ENCODE measurements at regions of chr2 and their contacts with region 1.

Region 1: DNA sequence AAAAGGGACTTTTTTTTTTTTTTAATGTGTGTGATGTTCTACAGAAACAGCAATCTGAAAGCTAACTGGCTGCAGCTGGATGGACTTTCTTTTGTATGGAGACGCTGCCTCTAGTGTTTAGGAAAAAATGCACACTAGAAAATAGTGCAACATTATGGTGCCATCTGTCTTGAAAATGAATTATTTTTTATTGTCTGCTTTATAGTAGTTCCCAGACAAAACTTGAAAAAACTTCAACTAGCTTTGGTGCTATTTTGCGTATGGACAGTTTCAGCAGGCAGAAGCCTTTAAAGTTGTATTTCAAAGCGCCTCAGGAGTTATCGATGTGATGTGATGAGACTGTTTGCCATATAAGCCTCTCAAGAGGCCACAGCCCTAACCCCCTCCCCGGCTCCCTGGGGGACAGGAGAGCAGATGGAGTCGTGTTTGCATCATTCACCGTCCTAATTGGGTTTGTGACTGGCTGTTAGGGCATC is 86.9 kb downstream of the LTBP1 start:
- DNase-seq: no peak
- H3K4me3 ChIP-seq: no peak overlapping the region
- H3K27ac ChIP-seq: no peak overlapping the region
- H3K4me1 ChIP-seq: no peaks in the 10 kb centered on the region
- H3K27me3 ChIP-seq: no peaks in the 10 kb centered on the region
- CTCF ChIP-seq: peak; percentile 38

Region 2: DNA sequence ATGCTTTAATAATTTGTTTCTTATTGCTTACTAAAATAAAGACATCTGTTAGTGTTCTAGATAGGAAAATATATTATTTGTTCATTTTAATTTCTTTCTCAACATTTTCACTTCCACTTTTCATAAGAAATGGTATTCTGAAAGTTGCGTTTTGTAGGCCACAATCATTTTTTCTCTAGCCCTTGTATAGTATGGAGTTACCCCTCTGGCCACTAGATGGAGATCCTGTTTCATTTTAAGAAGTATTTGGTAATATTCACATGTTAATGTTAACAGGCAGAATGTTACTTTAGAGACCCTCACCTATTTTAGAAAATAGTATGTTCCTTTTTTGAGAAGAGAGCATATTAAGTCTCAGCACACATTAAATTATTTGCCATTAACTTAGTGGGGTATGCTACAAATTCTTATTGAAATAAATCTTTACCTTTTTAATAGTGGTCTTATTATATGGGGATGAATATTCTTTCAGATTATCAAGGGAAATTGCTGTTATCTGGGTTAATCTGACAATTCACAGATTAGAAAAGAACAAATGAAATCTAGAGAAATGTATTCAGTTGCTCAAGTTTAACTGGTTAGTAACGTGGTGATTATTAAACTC is 479.7 kb before region 1 on chr2:
- intact Hi-C with region 1: loop called (anchors 10 kb)
- DNase-seq: no peak
- H3K4me3 ChIP-seq: no peak overlapping the region
- H3K27ac ChIP-seq: no peak overlapping the region
- H3K4me1 ChIP-seq: no peaks in the 10 kb centered on the region
- H3K27me3 ChIP-seq: no peaks in the 10 kb centered on the region
- CTCF ChIP-seq: peak; percentile 59

Region 3: DNA sequence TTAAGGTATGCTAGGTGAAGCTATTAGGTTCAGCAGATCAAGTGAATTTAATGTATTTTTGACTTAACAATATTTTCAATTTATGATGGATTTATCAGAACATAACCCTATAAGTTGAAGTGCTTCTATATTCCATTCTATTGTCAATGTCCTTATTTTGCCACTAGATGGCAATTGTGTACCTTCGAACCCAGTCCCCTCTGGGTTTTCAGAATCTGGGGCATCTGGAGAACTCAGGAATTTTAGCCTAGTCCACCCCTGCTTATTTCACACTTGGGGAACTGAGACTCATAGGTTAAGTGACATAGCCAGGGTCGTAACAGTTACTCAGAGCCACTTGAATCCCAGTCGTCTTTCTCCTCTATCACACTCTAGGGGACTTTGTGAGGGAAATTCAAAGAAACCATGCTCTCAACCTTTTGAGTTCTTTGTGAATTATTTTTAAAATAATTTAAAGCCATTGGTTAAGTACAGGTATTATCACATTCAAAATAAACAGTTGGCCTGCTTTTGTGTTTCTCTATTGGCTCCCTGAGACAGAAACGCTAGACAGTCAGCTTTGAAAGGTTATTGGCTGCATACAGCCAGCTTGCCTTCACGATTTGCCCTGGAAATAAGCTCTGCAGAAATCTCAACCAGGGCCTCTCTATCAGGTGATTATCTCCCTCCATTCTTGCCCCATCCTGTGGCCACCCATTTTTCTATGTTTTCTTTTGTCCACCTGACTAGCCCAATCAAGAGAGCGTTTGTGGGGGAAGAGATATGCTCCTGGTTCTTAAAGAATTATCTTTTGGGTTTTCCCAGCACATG is 260.8 kb before region 1 on chr2:
- intact Hi-C with region 1: loop called (anchors 5 kb)
- DNase-seq: no peak
- H3K4me3 ChIP-seq: no peak overlapping the region
- H3K27ac ChIP-seq: no peak overlapping the region
- H3K4me1 ChIP-seq: no peaks in the 10 kb centered on the region
- H3K27me3 ChIP-seq: no peaks in the 10 kb centered on the region
- CTCF ChIP-seq: peak; percentile 62

Region 4: GRCh38 chr2:32942793-32943485 is 90.7 kb before region 1 on chr2:
- intact Hi-C with region 1: loop called (anchors 5 kb)
- DNase-seq: no peak
- H3K4me3 ChIP-seq: no peak overlapping the region
- H3K27ac ChIP-seq: no peak overlapping the region
- H3K4me1 ChIP-seq: no peaks in the 10 kb centered on the region
- H3K27me3 ChIP-seq: no peaks in the 10 kb centered on the region
- CTCF ChIP-seq: no peak

Region 5: GRCh38 chr2:33275689-33276444 is 242.2 kb after region 1 on chr2:
- intact Hi-C with region 1: loop called (anchors 10 kb)
- DNase-seq: no peak
- H3K4me3 ChIP-seq: no peak overlapping the region
- H3K27ac ChIP-seq: no peak overlapping the region
- H3K4me1 ChIP-seq: no peaks in the 10 kb centered on the region
- H3K27me3 ChIP-seq: no peaks in the 10 kb centered on the region
- CTCF ChIP-seq: no peak

Region 6: DNA sequence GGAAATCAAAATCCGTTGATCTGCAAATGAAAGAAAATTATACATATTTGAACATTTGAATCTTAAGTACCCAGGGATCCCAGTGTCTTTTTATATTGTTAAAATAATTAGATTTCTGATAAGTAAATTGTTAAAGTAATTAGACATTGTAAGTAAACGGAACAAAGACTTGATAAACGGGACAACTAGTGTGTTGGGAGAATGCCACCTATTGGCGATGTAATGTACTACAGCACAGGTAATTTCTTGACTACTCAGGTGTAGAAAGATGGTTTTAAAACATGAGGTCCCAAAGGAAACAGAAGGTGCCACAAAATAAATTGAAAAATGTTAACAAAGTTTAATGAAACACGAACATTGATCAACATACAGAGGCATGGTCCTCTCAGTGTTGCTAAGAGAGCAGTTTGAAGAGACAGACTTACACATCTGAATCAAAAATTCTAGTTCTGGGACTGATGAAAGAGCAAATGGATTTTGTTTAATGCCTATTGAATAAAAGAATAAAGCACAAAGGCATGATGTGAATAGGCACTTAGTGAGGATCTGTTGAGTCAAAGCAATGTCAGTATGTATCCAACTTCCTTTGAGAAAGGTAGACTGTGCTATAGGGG is 339.4 kb after region 1 on chr2:
- intact Hi-C with region 1: loop called (anchors 10 kb)
- DNase-seq: peak; percentile 52
- H3K4me3 ChIP-seq: no peak overlapping the region
- H3K27ac ChIP-seq: no peak overlapping the region
- H3K4me1 ChIP-seq: no peaks in the 10 kb centered on the region
- H3K27me3 ChIP-seq: no peaks in the 10 kb centered on the region
- CTCF ChIP-seq: peak; percentile 81